Activated CD8-positive, alpha-beta T cell treated with anti-CD3 and anti-CD28 coated beads for 36 hours (primary cell): ENCODE measurements at regions of chr17 and their contacts with region 1.

Region 1: GRCh38 chr17:28612936-28613872 is 781 bp downstream of the RSKR start:
- DNase-seq: peak; percentile 55
- ATAC-seq: peak; percentile 64
- H3K4me3 Mint-ChIP-seq: no peak overlapping the region
- H3K27ac Mint-ChIP-seq: no peak overlapping the region
- H3K4me1 Mint-ChIP-seq: no peaks in the 10 kb centered on the region
- H3K27me3 Mint-ChIP-seq: no peaks in the 10 kb centered on the region
- CTCF ChIP-seq: peak; percentile 80

Region 2: DNA sequence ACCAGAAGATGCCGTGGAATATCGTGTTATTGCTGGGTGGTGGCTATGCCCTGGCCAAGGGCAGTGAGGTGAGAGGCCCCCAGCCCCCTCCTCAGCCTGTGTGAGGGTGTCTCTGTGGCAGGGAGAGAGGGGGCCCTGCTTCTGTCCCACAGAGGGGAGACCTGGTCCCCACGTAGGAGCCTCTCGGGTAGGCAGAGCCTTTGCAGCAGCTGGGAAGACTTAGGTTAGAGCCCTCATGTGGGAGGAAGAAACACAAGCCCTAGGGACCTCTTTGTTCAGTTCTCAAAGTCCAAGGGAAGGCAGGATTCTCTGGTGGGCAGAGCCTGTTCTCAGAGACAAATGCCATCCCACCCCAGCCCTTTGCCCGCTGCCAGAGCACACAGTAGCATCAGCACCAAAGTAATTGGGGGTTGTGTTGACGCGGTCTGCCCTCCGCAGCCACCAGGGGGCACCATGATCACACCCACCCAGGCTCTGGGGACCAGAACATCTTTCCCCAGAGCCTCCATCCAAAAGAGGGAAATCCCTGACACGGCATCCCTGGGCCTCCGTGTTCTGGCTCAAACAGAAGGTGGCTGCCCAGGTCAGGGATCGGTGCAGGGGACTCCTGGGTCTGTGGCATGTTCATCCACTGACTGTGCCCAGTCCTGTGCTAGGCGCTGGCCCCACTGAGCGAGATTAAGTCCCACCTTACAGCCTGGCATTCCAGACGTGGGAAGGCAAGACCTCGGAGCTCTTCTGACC is 118.6 kb before region 1 on chr17:
- CTCF ChIA-PET with region 1: interaction called, 8 read pairs
- POLR2A ChIA-PET with region 1: no interaction called
- intact Hi-C with region 1: loop called (anchors 5 kb)
- DNase-seq: peak; percentile 84
- ATAC-seq: peak; percentile 96
- H3K4me3 Mint-ChIP-seq: no peak overlapping the region
- H3K27ac Mint-ChIP-seq: no peak overlapping the region
- H3K4me1 Mint-ChIP-seq: no peaks in the 10 kb centered on the region
- H3K27me3 Mint-ChIP-seq: peaks cover 2% of the 10 kb centered on the region
- CTCF ChIP-seq: peak; percentile 83

Region 3: DNA sequence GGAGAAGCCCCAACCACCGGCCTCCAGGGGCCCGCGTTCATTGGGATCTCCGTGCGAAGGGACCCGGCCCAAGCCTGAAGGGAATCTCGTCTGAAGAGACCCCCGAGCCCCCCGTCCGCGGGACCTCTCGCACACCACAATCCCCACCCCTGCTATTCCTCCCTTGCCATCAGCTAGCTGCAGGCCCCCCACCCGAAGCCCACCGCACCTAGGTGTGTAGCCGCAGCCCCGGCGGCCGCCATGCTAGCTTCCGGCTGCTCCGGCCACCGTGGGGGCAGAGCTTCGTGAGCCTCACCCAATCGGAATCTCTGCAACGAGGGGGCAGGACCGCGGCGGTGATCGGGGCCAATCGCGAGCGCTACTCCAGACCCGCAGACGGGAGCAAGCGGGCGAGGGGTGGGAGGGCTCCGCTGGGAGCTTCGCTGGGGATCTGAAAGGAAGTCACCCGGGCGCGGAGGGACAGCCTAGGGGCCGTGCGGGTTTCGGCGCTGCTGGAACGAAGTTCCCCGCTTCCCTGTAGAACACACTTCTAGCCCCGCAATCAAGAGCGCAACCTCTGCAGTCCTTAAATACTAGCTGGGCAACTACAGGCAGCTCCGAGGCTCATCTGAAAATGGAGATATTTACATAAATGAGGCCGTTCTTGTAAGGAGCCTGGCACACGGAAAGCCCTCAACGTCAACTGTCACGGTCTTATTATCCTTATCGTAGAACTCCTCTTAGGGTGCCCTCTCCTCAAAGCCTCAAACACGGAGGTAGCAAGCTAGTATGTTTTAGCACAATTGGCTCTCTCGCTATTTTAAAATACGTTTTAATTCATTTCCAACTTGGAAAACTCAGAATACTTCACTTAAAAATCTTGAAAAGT is 41.7 kb before region 1 on chr17 and contains the start of gene PIGS:
- CTCF ChIA-PET with region 1: interaction called, 11 read pairs
- POLR2A ChIA-PET with region 1: interaction called, 3 read pairs
- intact Hi-C with region 1: no loop called
- DNase-seq: peak; percentile 95
- ATAC-seq: peak; percentile 98
- H3K4me3 Mint-ChIP-seq: peak within 1 kb of the TSS; percentile 89
- H3K27ac Mint-ChIP-seq: peak within 1 kb of the TSS; percentile 93
- H3K4me1 Mint-ChIP-seq: peaks cover 48% of the 10 kb centered on the region
- H3K27me3 Mint-ChIP-seq: no peaks in the 10 kb centered on the region
- CTCF ChIP-seq: no peak
- total RNA-seq, gene PIGS: 33.8 to 36.9 TPM

Region 4: GRCh38 chr17:28598799-28599310 is 14.3 kb before region 1 on chr17 and contains the start of gene SPAG5:
- CTCF ChIA-PET with region 1: interaction called, 10 read pairs
- POLR2A ChIA-PET with region 1: interaction called, 5 read pairs
- intact Hi-C with region 1: no loop called
- DNase-seq: peak; percentile 97
- ATAC-seq: peak; percentile 92
- H3K4me3 Mint-ChIP-seq: peak within 1 kb of the TSS; percentile 88
- H3K27ac Mint-ChIP-seq: peak within 1 kb of the TSS; percentile 91
- H3K4me1 Mint-ChIP-seq: peaks cover 17% of the 10 kb centered on the region
- H3K27me3 Mint-ChIP-seq: no peaks in the 10 kb centered on the region
- CTCF ChIP-seq: no peak
- total RNA-seq, gene SPAG5: 140 to 141 TPM

Region 5: DNA sequence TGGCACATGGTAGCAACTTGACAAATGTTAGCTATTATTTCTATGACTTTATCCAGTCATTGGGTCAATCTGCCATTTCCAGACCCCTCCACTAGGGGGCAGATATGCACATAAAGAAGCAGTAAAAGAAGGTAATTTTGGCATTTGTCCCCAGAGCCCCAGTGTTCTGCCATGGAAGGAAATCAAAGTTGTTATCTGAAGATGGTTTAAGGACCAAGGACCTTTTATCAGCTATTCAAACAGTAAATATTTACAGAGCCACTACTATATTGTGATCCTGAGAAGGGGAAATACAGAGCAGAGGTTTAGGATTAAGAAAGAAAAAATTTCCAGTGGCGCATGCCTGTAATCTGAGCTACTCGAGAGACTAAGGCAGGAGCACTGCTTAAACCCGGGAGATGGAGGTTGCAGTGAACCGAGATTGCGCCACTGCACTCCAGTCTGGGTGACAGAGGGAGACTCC is 150.6 kb after region 1 on chr17:
- CTCF ChIA-PET with region 1: no interaction called
- POLR2A ChIA-PET with region 1: no interaction called
- intact Hi-C with region 1: no loop called
- DNase-seq: peak; percentile 93
- ATAC-seq: peak; percentile 88
- H3K4me3 Mint-ChIP-seq: no peak overlapping the region
- H3K27ac Mint-ChIP-seq: no peak overlapping the region
- H3K4me1 Mint-ChIP-seq: peaks cover 16% of the 10 kb centered on the region
- H3K27me3 Mint-ChIP-seq: no peaks in the 10 kb centered on the region
- CTCF ChIP-seq: peak; percentile 97